ENCODE measurements at regions of chr2 and their contacts with region 1.

Region 1: DNA sequence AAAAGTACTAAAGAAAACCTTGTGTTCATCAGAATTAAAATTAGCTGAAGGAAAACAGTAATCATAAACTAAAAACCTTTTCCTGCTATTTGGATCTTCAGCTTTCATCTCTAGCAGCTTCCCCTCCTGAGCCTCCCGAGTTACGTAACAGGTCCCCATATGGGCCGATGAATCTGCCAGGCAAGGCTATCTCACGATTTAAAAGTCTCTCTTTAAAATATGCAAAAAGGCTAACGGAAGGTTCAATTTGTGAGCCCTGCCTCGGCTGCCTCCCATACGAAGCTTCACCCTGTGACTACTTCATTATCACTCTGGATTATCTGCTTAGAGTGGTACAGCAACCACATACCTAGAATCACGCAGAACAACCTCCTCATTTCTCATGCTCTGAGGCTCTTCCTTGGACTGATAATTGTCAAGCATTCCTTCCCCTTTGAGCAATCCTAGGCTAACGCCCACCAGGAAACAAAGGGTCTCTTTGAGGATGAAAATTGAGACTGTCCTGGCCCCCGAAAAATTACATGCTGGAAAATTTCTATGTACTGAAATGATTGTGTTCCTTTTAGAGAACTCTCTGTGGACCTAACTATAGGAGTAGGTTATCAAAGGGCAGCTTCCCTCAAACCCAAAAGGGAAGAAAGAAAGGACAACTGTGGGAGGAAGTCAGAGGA is 147.4 kb downstream of the ZEB2 start:
- DNase-seq: no peak
- CTCF ChIP-seq: no peak

Region 2: DNA sequence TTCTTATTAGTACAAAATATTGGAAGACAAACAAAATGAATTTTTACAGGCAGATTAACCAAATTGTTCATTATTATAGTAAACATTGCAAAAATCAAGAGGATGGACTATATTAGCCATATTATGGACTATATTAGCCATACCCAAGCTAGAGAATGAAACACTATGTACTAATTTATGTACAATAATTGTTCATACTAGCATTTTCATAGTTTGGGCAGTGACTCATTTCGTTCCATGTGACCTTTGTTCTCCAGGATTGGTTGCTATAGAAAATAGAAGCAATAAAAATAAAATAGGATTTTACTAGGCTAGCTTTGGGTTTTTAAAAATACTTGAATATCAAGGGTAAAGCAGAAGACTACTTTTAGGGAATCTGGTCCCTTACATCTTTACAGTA is 29.4 kb before region 1 on chr2:
- CTCF ChIA-PET with region 1: interaction called, 10 read pairs
- POLR2A ChIA-PET with region 1: no interaction called
- DNase-seq: no peak
- CTCF ChIP-seq: no peak

Region 3: GRCh38 chr2:144357623-144358373 is 14.7 kb before region 1 on chr2:
- CTCF ChIA-PET with region 1: interaction called, 10 read pairs
- POLR2A ChIA-PET with region 1: no interaction called
- DNase-seq: peak; percentile 57
- CTCF ChIP-seq: no peak

Region 4: DNA sequence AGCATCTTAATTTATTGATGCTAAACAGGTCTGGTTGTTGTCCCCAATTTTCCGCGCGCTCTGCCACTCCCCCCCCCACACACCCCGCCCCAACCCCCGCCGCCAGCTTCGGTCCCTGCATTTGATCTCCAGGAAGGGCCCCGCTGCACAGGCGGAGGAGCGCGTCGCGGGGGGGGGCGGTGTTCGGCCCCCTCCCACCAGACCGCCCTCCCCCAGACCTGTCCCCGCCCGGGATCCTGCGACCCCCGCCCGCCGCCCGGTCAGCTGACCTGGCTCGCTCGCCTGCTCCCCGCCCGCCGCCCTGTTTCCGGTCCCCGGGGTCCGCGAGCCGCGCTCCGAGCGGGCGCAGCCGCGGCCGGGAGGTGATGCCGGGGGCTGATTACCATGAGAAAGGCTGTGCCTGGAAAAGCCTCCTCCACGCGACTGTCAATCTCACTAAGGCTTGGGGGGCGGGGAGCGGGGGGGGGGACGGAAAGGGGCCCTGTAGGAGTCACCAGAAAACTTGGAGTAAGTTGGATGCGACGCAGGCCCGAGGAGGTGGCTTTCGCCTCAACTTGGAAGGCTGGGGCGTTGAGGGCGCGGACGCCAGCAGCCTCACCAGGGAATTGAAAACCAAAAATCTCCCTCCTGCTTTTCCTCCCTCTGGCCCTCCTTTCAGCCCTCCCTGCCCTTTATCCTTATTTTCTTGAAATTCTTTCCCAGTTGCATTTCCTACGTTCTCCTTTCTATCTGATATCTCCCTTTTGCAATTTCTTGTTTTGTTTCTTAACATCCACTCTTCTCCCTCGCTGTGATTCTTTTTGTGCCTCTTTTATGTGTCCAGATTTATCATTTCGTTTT is 151.8 kb after region 1 on chr2:
- CTCF ChIA-PET with region 1: no interaction called
- POLR2A ChIA-PET with region 1: no interaction called
- DNase-seq: no peak
- CTCF ChIP-seq: no peak